Activated B cell treated with CpG ODN at 0.5 μM for 24 hours (primary cell): ENCODE measurements at regions of chr19 and their contacts with region 1.

Region 1: DNA sequence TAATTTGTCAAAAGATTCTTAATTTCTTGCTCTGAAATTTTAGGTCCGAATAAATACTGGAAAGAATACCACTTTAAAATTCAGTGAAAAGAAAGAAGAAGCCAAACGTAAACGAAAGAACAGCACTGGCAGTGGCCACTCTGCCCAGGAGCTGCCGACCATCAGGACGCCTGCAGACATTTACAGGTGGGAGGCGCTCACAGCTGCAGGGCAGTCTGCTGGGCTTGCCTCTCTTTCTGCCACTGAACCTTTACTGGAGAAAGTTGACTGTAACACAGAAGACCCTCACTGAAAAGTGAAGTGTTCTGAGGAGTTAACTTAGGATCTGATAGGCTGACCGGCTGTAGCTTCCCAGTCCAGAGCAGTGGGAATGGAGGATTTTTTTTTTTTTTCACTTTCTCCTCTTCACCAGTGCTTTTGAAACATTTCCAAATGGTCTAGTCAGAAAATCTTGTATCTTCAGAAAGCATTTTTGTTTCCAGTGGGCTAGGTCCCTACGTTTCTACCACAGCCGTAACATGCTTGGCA is 69.1 kb downstream of the URI1 start:
- DNase-seq: no peak
- ATAC-seq: no peak
- H3K4me3 Mint-ChIP-seq: no peak overlapping the region
- H3K27ac Mint-ChIP-seq: no peak overlapping the region
- H3K4me1 Mint-ChIP-seq: peaks cover under 1% of the 10 kb centered on the region
- H3K27me3 Mint-ChIP-seq: no peaks in the 10 kb centered on the region
- CTCF ChIP-seq: no peak

Region 2: DNA sequence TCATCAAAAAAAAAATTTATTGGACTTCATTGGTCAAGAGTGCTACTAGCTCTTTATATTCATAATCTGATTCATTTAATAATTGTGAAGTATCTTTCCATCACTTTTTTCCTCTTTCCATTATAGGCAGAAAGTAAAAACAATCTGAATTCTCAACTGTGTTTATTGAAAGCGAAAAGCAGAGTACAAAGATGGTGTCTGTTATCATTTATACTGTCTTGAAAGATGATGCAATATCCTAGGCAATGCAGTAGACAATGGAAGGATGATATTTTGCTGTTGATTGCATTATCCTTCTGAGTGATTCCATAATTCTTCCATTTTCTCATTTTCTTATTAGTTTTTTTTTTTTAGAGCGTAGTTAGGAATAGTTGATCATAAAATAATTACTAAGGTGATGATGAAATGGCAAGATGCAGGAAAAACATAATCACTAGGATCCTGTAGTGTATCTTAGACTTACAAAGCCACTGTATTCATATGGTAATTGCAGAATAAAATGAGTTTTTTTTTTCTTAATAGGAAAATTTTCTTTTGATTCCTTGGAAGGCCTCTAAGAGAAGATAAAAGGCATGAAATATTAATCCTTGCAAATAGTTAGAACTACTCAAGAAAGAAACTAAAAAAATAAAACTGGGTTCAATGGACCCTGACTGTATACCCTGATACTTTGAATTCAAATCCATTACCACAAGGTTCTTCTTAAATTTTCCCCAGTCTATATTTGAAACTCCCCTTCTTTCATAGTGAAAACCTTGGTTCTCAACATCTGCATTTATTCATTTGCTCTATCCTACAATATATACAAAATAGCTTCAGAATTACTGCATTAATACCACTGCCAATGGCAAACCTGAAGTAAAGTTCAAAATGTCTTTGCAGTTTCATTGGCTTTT is 57.5 kb before region 1 on chr19:
- CTCF ChIA-PET with region 1: no interaction called
- POLR2A ChIA-PET with region 1: no interaction called
- intact Hi-C with region 1: no loop called
- DNase-seq: no peak
- ATAC-seq: peak; percentile 49
- H3K4me3 Mint-ChIP-seq: no peak overlapping the region
- H3K27ac Mint-ChIP-seq: peak overlapping the region; percentile 53
- H3K4me1 Mint-ChIP-seq: peaks cover 32% of the 10 kb centered on the region
- H3K27me3 Mint-ChIP-seq: no peaks in the 10 kb centered on the region
- CTCF ChIP-seq: no peak

Region 3: DNA sequence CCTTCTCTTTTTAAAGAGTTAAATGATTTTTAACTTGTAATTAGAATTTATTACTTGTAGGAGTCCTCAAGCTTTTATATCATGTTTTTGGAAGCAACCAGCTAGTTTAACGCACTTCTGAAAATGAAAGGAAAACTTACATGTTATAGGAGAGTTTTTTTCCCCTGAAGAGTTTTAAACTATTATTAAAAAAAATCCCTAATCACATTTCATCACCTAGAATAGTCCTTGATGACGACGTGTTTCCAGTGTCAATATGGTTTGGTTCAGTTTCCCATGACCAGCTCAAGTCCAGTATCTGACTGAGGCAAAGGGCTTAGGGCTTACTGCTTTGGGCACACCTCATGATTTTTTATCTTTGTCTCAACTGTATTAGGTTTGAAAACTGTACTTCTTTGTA is 33.0 kb before region 1 on chr19:
- CTCF ChIA-PET with region 1: no interaction called
- POLR2A ChIA-PET with region 1: no interaction called
- intact Hi-C with region 1: loop called (anchors 5 kb)
- DNase-seq: no peak
- ATAC-seq: no peak
- H3K4me3 Mint-ChIP-seq: no peak overlapping the region
- H3K27ac Mint-ChIP-seq: no peak overlapping the region
- H3K4me1 Mint-ChIP-seq: peaks cover 43% of the 10 kb centered on the region
- H3K27me3 Mint-ChIP-seq: no peaks in the 10 kb centered on the region
- CTCF ChIP-seq: no peak